Adrenal gland (tissue), 19 donors: ENCODE measurements at regions of chr1 and their contacts with region 1.

Region 1: GRCh38 chr1:151113877-151114276 is 32.6 kb downstream of the SEMA6C start:
- DNase-seq: no peak
- H3K4me3 ChIP-seq: no peak overlapping the region
- H3K27ac ChIP-seq: no peak overlapping the region
- H3K4me1 ChIP-seq: no peaks in the 10 kb centered on the region
- H3K27me3 ChIP-seq: no peaks in the 10 kb centered on the region
- CTCF ChIP-seq: no peak
- POLR2A ChIP-seq: no peak

Region 2: GRCh38 chr1:151146412-151147140 is 32.7 kb after region 1 on chr1 and contains the start of gene SEMA6C:
- intact Hi-C with region 1: loop called in 1 of 2 experiments (anchors 5 kb)
- DNase-seq: peak; percentile 93 to 96 (median 94)
- H3K4me3 ChIP-seq: peak within 1 kb of the TSS in 3 of 4 donors; percentile 23 to 67 (median 40)
- H3K27ac ChIP-seq: peak within 1 kb of the TSS in 4 of 5 donors; percentile 10 to 77 (median 64)
- H3K4me1 ChIP-seq: peaks cover 0 to 21% of the 10 kb centered on the region in 2 donors
- H3K27me3 ChIP-seq: no peaks in the 10 kb centered on the region
- CTCF ChIP-seq: no peak
- POLR2A ChIP-seq: peak in 1 of 2 donors; percentile 63
- total RNA-seq, gene SEMA6C: 0.66 to 7.1 (median 3.6) TPM